HEK293 (cell line): ENCODE measurements at regions of chr10 and their contacts with region 1.

Region 1: GRCh38 chr10:103685880-103686669 is 169.3 kb downstream of the SH3PXD2A start:
- H3K4me3 ChIP-seq: no peak overlapping the region
- H3K27ac ChIP-seq: no peak overlapping the region
- H3K4me1 ChIP-seq: no peaks in the 10 kb centered on the region
- CTCF ChIP-seq: peak; percentile 79

Region 2: DNA sequence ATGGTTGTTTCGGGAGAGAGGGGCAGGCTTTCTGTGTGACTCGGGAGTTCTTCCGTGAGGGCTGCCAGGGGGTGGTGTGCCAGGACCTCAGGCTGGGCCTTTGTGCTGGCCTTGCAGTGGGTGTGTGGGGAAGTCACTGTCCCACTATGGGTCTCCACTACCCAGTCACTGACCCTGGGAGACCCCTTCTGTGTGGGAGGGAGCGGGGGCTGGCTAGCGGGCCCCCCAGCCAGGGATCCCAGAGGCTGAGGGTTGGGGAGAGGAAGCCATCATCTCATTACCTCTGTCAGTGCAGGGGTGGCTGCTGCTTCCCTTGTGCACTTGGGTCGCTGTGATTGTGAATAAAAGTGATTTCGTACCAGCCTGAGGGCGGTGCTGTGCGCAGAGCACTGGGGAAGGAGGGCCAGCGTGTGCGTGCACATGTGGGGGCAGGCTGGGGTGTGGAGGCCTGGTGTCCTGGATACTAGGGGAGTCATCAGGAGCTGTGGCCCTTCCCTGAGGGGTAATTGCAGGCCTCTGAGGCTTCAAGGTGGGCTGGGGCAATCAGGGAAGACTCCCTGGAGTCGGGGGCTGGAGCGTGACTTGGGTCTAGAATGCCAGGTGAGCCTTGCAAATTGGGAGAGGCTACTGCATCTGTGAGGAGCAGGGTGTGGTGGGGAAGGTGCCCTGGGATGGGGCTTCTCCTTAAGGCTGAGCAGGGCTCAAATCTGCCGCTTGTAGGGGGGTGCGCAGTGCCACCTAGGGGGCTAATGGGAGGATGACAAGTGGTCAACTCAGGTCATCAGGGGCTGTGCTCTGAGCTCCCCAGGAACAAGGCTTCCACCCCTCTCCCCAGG is 93.7 kb before region 1 on chr10:
- CTCF ChIA-PET with region 1: interaction called, 14 read pairs
- POLR2A ChIA-PET with region 1: no interaction called
- H3K4me3 ChIP-seq: no peak overlapping the region
- H3K27ac ChIP-seq: no peak overlapping the region
- H3K4me1 ChIP-seq: no peaks in the 10 kb centered on the region
- CTCF ChIP-seq: peak; percentile 79

Region 3: GRCh38 chr10:103598654-103599115 is 87.4 kb before region 1 on chr10:
- CTCF ChIA-PET with region 1: interaction called, 37 read pairs
- POLR2A ChIA-PET with region 1: no interaction called
- H3K4me3 ChIP-seq: no peak overlapping the region
- H3K27ac ChIP-seq: no peak overlapping the region
- H3K4me1 ChIP-seq: no peaks in the 10 kb centered on the region
- CTCF ChIP-seq: peak; percentile 90

Region 4: GRCh38 chr10:103605359-103606095 is 80.5 kb before region 1 on chr10:
- CTCF ChIA-PET with region 1: interaction called, 37 read pairs
- POLR2A ChIA-PET with region 1: no interaction called
- H3K4me3 ChIP-seq: no peak overlapping the region
- H3K27ac ChIP-seq: no peak overlapping the region
- H3K4me1 ChIP-seq: no peaks in the 10 kb centered on the region
- CTCF ChIP-seq: no peak

Region 5: GRCh38 chr10:103666087-103666761 is 19.9 kb before region 1 on chr10:
- CTCF ChIA-PET with region 1: interaction called, 28 read pairs
- POLR2A ChIA-PET with region 1: no interaction called
- H3K4me3 ChIP-seq: no peak overlapping the region
- H3K27ac ChIP-seq: no peak overlapping the region
- H3K4me1 ChIP-seq: no peaks in the 10 kb centered on the region
- CTCF ChIP-seq: no peak

Region 6: DNA sequence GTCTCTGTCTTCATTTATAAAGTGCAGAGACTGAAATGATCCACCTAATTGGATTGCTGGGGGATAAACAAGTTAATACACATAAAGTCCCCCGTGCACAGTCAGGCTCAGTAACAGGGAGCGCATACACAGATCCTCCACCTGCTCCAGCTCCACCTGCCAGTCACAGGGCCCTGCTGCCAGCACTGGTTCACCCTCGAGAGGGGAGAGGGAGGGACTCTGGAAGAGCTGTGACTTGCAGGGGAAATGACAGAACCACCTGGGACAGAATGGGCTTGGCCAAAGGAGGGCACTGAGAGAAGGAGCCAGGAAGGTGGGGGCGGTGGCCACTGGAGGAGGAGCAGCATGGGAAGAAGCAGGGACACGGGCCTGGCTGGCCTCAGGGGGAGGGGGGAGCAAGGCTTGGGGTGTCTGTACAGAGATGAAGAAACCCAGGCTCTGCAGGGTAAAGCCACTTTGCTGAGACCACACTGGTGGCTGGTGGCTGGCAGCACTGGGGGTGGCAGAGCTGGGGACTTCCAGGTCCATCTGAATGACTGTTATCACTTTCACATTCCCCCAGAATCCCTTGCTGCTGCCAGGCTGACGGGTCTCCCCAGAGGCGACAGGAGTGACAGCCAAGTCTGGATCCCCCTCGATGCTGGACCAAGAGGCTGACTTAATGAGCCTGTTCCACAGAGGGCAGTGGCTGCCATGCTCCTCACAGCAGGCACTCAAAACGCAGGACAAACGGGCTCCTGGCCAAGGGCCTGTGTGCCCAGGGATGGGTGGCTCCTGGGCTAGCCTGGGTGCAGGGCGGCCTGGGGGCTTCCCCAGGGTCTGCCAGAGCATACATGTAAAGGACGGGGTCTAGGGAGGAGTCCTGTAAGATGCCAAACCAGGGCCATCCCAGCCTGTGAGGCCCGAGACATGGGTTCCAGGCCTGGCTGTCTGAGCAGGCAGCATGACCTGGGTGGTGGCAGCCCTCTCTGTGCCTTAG is 18.2 kb after region 1 on chr10:
- CTCF ChIA-PET with region 1: no interaction called
- POLR2A ChIA-PET with region 1: no interaction called
- H3K4me3 ChIP-seq: no peak overlapping the region
- H3K27ac ChIP-seq: no peak overlapping the region
- H3K4me1 ChIP-seq: no peaks in the 10 kb centered on the region
- CTCF ChIP-seq: no peak

Region 7: GRCh38 chr10:103833731-103834365 is 147.8 kb after region 1 on chr10:
- CTCF ChIA-PET with region 1: no interaction called
- POLR2A ChIA-PET with region 1: no interaction called
- H3K4me3 ChIP-seq: no peak overlapping the region
- H3K27ac ChIP-seq: peak overlapping the region; percentile 10; the same call in 1 of the 2 replicates
- H3K4me1 ChIP-seq: peaks cover 27% of the 10 kb centered on the region
- CTCF ChIP-seq: no peak